Pancreas (tissue), 10 donors: ENCODE measurements at regions of chr3 and their contacts with region 1.

Region 1: GRCh38 chr3:62188681-62189383 is 184.5 kb downstream of the FEZF2 start:
- DNase-seq: peak; percentile 30 to 79 (median 68)
- ATAC-seq: peak; percentile 80 to 91 (median 89)
- H3K4me3 ChIP-seq: no peak overlapping the region
- H3K27ac ChIP-seq: no peak overlapping the region
- H3K4me1 ChIP-seq: no peaks in the 10 kb centered on the region
- H3K27me3 ChIP-seq: no peaks in the 10 kb centered on the region
- CTCF ChIP-seq: peak; percentile 59 to 83 (median 76)

Region 2: DNA sequence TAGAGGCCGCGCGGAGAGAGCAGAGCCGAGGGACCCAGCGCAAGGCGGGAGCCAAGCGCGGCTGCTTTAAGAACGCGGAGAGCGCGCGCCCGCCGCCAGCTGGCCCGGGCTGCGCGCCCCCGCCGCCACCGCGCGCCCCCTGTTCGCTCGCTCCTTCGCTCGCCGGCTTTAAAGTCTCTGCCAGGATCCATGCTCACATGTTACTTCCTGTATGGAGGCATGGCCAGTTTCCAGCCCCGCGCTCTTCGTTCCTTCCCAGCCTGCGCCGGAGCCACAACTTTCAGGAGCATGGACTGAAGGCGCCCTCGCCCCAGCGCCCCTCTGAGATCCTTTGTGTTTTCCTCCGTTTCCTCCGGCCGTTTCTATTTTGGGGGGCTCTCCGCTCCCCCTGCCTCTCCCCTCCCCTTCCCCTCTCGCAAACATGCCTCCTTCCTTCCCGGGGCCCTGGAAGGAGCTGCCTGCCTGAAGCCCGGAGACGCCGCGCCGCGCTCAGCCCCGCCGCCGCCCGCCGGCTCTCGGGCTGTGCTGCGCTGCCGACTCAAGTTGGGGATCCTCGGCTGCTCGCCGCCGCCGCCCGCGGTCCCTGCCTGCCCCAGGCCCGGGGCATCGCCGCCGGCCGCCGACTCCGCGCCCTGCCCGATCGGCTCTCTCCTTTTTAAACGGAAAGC is 627.3 kb before region 1 on chr3 and contains the start of gene PTPRG:
- intact Hi-C with region 1: loop called in 1 of 3 experiments (anchors 10 kb)
- DNase-seq: peak; percentile 88 to 94 (median 90)
- ATAC-seq: peak; percentile 84 to 89 (median 88)
- H3K4me3 ChIP-seq: peak within 1 kb of the TSS; percentile 51 to 73 (median 59)
- H3K27ac ChIP-seq: peak within 1 kb of the TSS; percentile 82 to 95 (median 93)
- H3K4me1 ChIP-seq: no peaks in the 10 kb centered on the region
- H3K27me3 ChIP-seq: no peaks in the 10 kb centered on the region
- CTCF ChIP-seq: no peak
- total RNA-seq, gene PTPRG: 6.4 to 20.5 (median 12.2) TPM

Region 3: GRCh38 chr3:62361261-62361660 is 172.4 kb after region 1 on chr3:
- intact Hi-C with region 1: no loop called
- DNase-seq: no peak
- ATAC-seq: no peak
- H3K4me3 ChIP-seq: no peak overlapping the region
- H3K27ac ChIP-seq: no peak overlapping the region
- H3K4me1 ChIP-seq: no peaks in the 10 kb centered on the region
- H3K27me3 ChIP-seq: peaks cover 0 to 3% (median 0%) of the 10 kb centered on the region in 4 donors
- CTCF ChIP-seq: no peak